Sciatic nerve (tissue), 2 donors: ENCODE measurements at regions of chr12 and their contacts with region 1.

Region 1: GRCh38 chr12:88001327-88001726 is 27.9 kb downstream of the C12orf50 start:
- DNase-seq: no peak
- ATAC-seq: no peak

Region 2: DNA sequence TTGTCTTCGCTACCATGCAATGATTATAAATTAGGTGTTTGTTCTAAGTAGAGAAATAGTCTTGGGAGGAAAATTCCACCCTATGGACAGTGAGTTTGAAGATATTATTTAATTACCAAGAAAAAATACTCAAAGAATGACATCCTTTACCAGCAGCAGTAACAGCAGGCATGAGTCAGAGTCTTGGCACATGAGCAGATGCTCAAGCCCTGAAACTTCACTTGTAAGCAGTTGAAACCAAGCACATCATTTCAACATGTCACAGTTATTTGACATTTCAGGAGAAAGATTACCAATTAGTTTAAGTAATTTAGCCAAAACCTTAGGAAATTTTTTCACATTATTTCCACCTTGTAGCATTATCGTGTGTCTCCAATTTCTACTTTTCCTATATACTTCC is 71.3 kb before region 1 on chr12:
- intact Hi-C with region 1: no loop called
- DNase-seq: no peak
- ATAC-seq: no peak

Region 3: DNA sequence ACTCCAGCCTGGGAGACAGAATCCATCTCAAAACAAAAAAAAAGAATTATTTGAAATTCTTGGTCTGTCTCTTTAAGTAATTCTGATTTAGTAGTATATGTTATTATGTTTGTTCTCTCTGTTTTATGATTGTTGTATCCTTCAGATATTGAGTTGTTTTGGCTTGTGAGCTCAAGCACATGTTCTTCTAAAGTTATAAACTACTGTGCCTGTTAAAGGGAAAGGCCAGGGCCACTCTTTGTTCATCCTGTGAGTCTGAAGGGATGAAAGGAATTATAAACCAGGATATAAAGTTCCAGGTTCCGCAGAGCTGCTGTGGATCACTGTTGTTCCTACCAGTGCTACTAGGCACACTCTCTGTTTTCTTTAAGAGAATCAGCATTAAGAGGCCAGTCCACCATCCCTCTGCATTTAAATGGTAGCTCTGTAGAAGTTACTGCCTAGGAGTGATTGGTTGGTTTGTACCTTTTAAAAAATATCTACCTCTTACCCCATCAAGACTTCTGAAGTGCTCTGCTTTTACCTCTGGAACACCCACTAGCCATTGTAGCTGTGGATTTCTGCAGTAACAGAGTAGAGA is 154.8 kb after region 1 on chr12:
- intact Hi-C with region 1: loop called (anchors 5 kb)
- DNase-seq: no peak
- ATAC-seq: no peak

Region 4: GRCh38 chr12:88529531-88530488 is 528.5 kb after region 1 on chr12:
- intact Hi-C with region 1: no loop called
- DNase-seq: no peak
- ATAC-seq: peak; percentile 49